Activated CD4-positive, alpha-beta T cell treated with anti-CD3 and anti-CD28 coated beads for 36 hours (primary cell): ENCODE measurements at regions of chr1 and their contacts with region 1.

Region 1: DNA sequence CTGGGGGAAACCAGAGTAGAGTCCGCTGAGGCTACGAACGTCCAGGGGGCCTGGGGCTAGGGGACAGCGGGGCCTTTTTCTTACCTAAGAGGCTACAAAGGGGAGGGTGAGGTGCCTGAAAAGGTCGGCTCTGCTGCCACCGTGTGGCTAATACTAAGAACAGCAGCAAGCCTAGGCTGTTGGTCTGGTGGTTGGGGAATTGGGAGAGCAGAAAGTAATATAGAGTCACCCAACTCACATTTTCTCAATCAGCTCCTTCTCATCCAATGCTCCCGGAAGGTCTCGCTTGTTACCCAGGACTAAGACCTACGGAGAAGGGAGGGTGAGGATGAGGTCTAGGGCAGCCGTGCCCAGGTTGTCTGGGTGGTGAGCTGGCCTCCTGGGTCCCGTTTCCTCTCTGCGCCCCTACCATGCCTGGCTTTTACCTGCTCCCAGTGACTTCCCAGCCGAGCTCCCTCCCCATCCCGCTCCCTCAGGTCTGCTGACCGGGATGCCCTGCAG is 9.3 kb downstream of the ARL8A start:
- DNase-seq: peak; percentile 70
- ATAC-seq: peak; percentile 87
- H3K4me3 Mint-ChIP-seq: no peak overlapping the region
- H3K27ac Mint-ChIP-seq: no peak overlapping the region
- H3K4me1 Mint-ChIP-seq: no peaks in the 10 kb centered on the region
- H3K27me3 Mint-ChIP-seq: no peaks in the 10 kb centered on the region

Region 2: GRCh38 chr1:201888282-201889089 is 246.8 kb before region 1 on chr1 and contains the start of gene SHISA4:
- CTCF ChIA-PET with region 1: no interaction called
- POLR2A ChIA-PET with region 1: interaction called, 12 read pairs
- intact Hi-C with region 1: no loop called
- DNase-seq: peak; percentile 23
- ATAC-seq: peak; percentile 66
- H3K4me3 Mint-ChIP-seq: peak within 1 kb of the TSS; percentile 15
- H3K27ac Mint-ChIP-seq: no peak within 1 kb of the TSS
- H3K4me1 Mint-ChIP-seq: peaks cover 4% of the 10 kb centered on the region
- H3K27me3 Mint-ChIP-seq: peaks cover 35% of the 10 kb centered on the region
- total RNA-seq, gene SHISA4: 0.14 to 0.26 TPM

Region 3: GRCh38 chr1:202009326-202010179 is 125.7 kb before region 1 on chr1:
- CTCF ChIA-PET with region 1: interaction called, 13 read pairs
- POLR2A ChIA-PET with region 1: no interaction called
- intact Hi-C with region 1: loop called (anchors 1 kb)
- DNase-seq: peak; percentile 76
- ATAC-seq: peak; percentile 78
- H3K4me3 Mint-ChIP-seq: no peak overlapping the region
- H3K27ac Mint-ChIP-seq: no peak overlapping the region
- H3K4me1 Mint-ChIP-seq: no peaks in the 10 kb centered on the region
- H3K27me3 Mint-ChIP-seq: no peaks in the 10 kb centered on the region

Region 4: GRCh38 chr1:202105539-202106276 is 29.6 kb before region 1 on chr1:
- CTCF ChIA-PET with region 1: no interaction called
- POLR2A ChIA-PET with region 1: no interaction called
- intact Hi-C with region 1: no loop called
- DNase-seq: no peak
- ATAC-seq: no peak
- H3K4me3 Mint-ChIP-seq: no peak overlapping the region
- H3K27ac Mint-ChIP-seq: no peak overlapping the region
- H3K4me1 Mint-ChIP-seq: no peaks in the 10 kb centered on the region
- H3K27me3 Mint-ChIP-seq: no peaks in the 10 kb centered on the region

Region 5: DNA sequence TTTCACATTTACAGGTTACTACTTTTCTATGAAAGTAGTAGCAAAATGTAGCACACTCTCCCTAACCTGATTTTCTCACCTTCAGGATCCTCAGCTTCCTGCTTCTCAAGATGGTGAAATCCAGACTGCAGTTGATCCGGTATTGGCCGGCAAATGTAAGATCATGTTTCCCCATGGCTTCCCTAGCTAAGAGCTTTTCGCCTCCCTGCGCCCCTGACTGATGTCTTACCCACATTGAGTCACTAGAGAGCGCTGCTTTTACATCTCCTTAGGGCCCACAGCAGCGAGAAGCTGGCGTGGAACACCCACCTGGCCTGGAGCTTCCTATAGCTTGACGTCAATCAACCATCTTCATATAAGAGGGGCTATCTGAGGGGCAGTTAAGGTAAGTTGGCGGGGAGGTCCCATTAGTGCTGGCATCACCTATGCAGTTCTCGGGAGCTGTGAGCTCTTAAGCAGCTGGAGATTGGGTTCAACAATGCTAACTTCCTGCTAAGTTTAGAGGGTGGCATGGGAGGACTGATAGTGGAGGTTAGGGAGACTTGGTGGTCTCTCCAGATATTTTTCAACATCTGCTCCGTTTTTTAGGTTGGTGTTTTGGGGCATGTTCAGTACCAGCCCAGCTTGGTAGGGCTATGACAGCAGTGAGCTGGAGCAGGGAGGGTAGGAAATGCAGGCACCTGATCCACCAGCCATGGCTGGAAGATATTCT is 19.7 kb after region 1 on chr1:
- CTCF ChIA-PET with region 1: interaction called, 11 read pairs
- POLR2A ChIA-PET with region 1: no interaction called
- intact Hi-C with region 1: no loop called
- DNase-seq: peak; percentile 67
- ATAC-seq: peak; percentile 63
- H3K4me3 Mint-ChIP-seq: no peak overlapping the region
- H3K27ac Mint-ChIP-seq: peak overlapping the region; percentile 78
- H3K4me1 Mint-ChIP-seq: peaks cover 47% of the 10 kb centered on the region
- H3K27me3 Mint-ChIP-seq: no peaks in the 10 kb centered on the region